CD8-positive, alpha-beta T cell (primary cell): ENCODE measurements at regions of chr1 and their contacts with region 1.

Region 1: GRCh38 chr1:25905680-25906643 is at the start of gene STMN1:
- DNase-seq: peak; percentile 77 to 93 (median 88)
- ATAC-seq: peak; percentile 72
- H3K4me3 ChIP-seq: peak within 1 kb of the TSS; percentile 63 to 68
- H3K4me3 Mint-ChIP-seq: peak within 1 kb of the TSS; percentile 95
- H3K27ac ChIP-seq: peak within 1 kb of the TSS; percentile 70 to 71
- H3K27ac Mint-ChIP-seq: peak within 1 kb of the TSS; percentile 95
- H3K4me1 ChIP-seq: peaks cover 8% of the 10 kb centered on the region
- H3K4me1 Mint-ChIP-seq: peaks cover 18% of the 10 kb centered on the region
- H3K27me3 ChIP-seq: no peaks in the 10 kb centered on the region
- H3K27me3 Mint-ChIP-seq: no peaks in the 10 kb centered on the region
- CTCF ChIP-seq: no peak
- total RNA-seq, gene STMN1: 18.5 to 19.6 TPM

Region 2: GRCh38 chr1:25858906-25859789 is 46.8 kb before region 1 on chr1 and contains the start of gene AUNIP:
- CTCF ChIA-PET with region 1: no interaction called
- POLR2A ChIA-PET with region 1: interaction called, 3 read pairs
- intact Hi-C with region 1: loop called in 1 of 2 experiments (anchors 2 kb)
- DNase-seq: peak; percentile 72 to 95 (median 88)
- ATAC-seq: peak; percentile 99
- H3K4me3 ChIP-seq: peak within 1 kb of the TSS; percentile 63 to 75
- H3K4me3 Mint-ChIP-seq: peak within 1 kb of the TSS; percentile 92
- H3K27ac ChIP-seq: peak within 1 kb of the TSS; percentile 66 to 71
- H3K27ac Mint-ChIP-seq: peak within 1 kb of the TSS; percentile 89
- H3K4me1 ChIP-seq: peaks cover 16% of the 10 kb centered on the region
- H3K4me1 Mint-ChIP-seq: peaks cover 15% of the 10 kb centered on the region
- H3K27me3 ChIP-seq: no peaks in the 10 kb centered on the region
- H3K27me3 Mint-ChIP-seq: no peaks in the 10 kb centered on the region
- CTCF ChIP-seq: no peak
- total RNA-seq, gene AUNIP: 0.30 TPM in 1 of 2 experiments, not detected in the other

Region 3: DNA sequence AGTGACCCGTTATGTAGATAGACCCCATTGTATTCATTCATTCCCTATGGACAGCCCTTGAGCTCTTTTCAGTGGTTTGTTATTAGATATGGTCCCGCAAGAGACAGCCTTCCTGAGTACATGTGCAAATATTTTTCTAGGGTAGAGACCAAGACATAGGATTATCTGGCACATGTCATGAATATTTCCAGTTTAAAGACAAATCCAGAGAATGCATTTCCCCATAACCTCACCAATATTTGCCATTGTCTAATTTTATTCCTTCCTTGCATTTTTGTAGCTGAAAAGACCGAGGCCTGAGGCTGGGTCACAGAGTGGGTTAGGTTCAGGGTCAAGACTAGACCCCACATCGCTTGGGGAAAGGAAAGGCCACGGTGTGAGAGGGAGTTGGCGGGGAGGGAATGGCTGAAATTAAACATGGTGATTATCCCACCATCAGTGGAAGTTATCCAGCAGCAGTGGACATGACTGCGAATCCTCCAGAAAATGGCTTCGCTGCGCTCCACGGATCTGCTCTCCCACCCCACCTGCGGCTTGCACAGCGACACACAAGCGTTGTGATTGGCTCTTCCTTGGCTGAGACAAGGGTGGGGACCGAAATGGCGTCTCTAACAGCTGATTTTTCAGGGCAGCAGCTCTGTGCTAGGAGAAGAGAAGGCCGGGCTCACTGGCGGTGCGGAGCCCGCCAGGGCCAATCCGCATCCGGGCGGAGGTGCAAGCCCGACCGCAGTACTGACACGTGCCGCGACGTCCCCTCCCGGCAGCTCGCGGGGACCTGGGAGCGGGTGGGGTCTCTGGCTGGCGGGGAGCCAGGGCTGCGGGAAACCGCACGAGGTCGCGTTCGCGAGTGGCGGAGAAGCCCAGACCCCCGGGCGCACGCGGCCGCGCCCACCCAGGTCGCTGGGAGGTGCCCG is 16.4 kb after region 1 on chr1:
- CTCF ChIA-PET with region 1: interaction called, 5 read pairs
- POLR2A ChIA-PET with region 1: interaction called, 7 read pairs
- intact Hi-C with region 1: loop called in 1 of 2 experiments (anchors 1 kb)
- DNase-seq: peak in 7 of 9 experiments; percentile 38 to 78 (median 62)
- ATAC-seq: peak; percentile 75
- H3K4me3 ChIP-seq: peak overlapping the region; percentile 57 to 63
- H3K4me3 Mint-ChIP-seq: peak overlapping the region; percentile 88
- H3K27ac ChIP-seq: peak overlapping the region; percentile 6 to 24
- H3K27ac Mint-ChIP-seq: peak overlapping the region; percentile 70
- H3K4me1 ChIP-seq: peaks cover 27% of the 10 kb centered on the region
- H3K4me1 Mint-ChIP-seq: peaks cover 29% of the 10 kb centered on the region
- H3K27me3 ChIP-seq: no peaks in the 10 kb centered on the region
- H3K27me3 Mint-ChIP-seq: no peaks in the 10 kb centered on the region
- CTCF ChIP-seq: no peak

Region 4: DNA sequence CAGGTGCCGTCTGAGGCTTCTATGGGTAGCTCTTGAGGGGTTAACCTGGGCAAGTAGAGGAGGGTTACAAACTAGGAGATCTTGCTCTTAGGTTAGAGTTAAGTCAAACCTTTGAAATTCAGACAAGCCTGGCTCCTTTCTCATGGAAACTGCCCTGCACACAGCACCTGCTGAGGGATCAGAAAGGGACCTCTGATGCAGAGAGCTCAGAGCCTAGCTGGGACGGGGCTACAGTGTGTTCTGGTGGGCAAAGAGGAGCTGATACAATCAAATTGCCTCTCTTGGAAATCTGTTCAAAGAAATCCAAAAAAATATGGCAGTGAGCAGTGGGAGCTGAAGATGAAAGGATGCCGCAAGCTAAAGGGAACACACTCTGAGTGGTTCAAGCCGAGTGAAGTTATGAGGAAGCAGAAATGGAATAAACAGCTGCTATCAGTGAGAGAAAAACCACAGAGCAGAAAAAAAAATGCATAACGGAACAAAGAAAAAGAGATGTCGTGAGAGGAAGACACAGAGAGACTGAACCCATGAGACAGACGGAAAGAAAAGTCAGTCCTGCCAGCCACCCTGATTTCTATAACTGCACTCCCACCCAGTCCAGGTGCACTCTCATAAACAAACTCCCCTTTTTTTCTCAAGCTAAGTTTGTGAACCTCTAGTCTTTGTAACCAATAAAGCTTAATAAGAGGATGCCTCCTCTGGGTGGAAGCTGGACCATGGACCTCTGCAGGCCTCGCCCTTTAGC is 65.3 kb after region 1 on chr1:
- CTCF ChIA-PET with region 1: interaction called, 3 read pairs
- POLR2A ChIA-PET with region 1: interaction called, 7 read pairs
- intact Hi-C with region 1: loop called in 1 of 2 experiments (anchors 2 kb)
- DNase-seq: peak in 4 of 9 experiments; percentile 22 to 61 (median 40)
- ATAC-seq: peak; percentile 75
- H3K4me3 ChIP-seq: no peak overlapping the region
- H3K4me3 Mint-ChIP-seq: peak overlapping the region; percentile 56
- H3K27ac ChIP-seq: peak overlapping the region in 1 of 2 experiments; percentile 55
- H3K27ac Mint-ChIP-seq: peak overlapping the region; percentile 88
- H3K4me1 ChIP-seq: peaks cover 20% of the 10 kb centered on the region
- H3K4me1 Mint-ChIP-seq: peaks cover 31% of the 10 kb centered on the region
- H3K27me3 ChIP-seq: no peaks in the 10 kb centered on the region
- H3K27me3 Mint-ChIP-seq: no peaks in the 10 kb centered on the region
- CTCF ChIP-seq: no peak

Region 5: GRCh38 chr1:25997828-25998761 is 92.1 kb after region 1 on chr1 and contains the start of gene PAFAH2:
- CTCF ChIA-PET with region 1: interaction called, 442 read pairs
- POLR2A ChIA-PET with region 1: interaction called, 24 read pairs
- intact Hi-C with region 1: loop called (anchors 1 kb)
- DNase-seq: peak; percentile 93 to 100 (median 96)
- ATAC-seq: peak; percentile 96
- H3K4me3 ChIP-seq: peak within 1 kb of the TSS; percentile 62 to 72
- H3K4me3 Mint-ChIP-seq: peak within 1 kb of the TSS; percentile 92
- H3K27ac ChIP-seq: peak within 1 kb of the TSS; percentile 79 to 87
- H3K27ac Mint-ChIP-seq: peak within 1 kb of the TSS; percentile 99
- H3K4me1 ChIP-seq: peaks cover 19% of the 10 kb centered on the region
- H3K4me1 Mint-ChIP-seq: peaks cover 42% of the 10 kb centered on the region
- H3K27me3 ChIP-seq: no peaks in the 10 kb centered on the region
- H3K27me3 Mint-ChIP-seq: no peaks in the 10 kb centered on the region
- CTCF ChIP-seq: peak; percentile 92
- total RNA-seq, gene PAFAH2: 9.1 to 11.8 TPM

Region 6: DNA sequence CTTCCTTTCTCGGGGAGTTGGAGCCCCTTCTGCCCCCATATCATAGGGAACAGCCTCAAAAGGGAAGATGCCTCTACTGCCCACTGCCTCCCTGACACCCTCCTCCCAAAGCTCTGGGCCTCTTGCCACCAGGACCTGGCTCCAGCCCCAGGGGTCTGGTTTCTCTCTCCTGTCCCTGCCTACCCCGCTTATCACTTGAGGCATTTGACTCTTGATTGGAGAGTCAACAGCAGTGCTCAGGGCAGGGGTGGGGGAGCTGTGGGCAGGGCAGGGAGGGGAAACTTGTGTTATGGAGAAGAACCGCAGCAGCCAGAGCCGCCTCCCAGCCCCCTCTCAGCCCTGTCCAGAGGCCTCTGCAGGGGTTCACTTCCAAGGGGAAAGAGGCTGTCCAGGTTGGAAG is 160.9 kb after region 1 on chr1:
- CTCF ChIA-PET with region 1: no interaction called
- POLR2A ChIA-PET with region 1: no interaction called
- intact Hi-C with region 1: no loop called
- DNase-seq: no peak
- ATAC-seq: no peak
- H3K4me3 ChIP-seq: no peak overlapping the region
- H3K4me3 Mint-ChIP-seq: no peak overlapping the region
- H3K27ac ChIP-seq: no peak overlapping the region
- H3K27ac Mint-ChIP-seq: no peak overlapping the region
- H3K4me1 ChIP-seq: no peaks in the 10 kb centered on the region
- H3K4me1 Mint-ChIP-seq: no peaks in the 10 kb centered on the region
- H3K27me3 ChIP-seq: no peaks in the 10 kb centered on the region
- H3K27me3 Mint-ChIP-seq: peaks cover 6% of the 10 kb centered on the region
- CTCF ChIP-seq: no peak

Region 7: DNA sequence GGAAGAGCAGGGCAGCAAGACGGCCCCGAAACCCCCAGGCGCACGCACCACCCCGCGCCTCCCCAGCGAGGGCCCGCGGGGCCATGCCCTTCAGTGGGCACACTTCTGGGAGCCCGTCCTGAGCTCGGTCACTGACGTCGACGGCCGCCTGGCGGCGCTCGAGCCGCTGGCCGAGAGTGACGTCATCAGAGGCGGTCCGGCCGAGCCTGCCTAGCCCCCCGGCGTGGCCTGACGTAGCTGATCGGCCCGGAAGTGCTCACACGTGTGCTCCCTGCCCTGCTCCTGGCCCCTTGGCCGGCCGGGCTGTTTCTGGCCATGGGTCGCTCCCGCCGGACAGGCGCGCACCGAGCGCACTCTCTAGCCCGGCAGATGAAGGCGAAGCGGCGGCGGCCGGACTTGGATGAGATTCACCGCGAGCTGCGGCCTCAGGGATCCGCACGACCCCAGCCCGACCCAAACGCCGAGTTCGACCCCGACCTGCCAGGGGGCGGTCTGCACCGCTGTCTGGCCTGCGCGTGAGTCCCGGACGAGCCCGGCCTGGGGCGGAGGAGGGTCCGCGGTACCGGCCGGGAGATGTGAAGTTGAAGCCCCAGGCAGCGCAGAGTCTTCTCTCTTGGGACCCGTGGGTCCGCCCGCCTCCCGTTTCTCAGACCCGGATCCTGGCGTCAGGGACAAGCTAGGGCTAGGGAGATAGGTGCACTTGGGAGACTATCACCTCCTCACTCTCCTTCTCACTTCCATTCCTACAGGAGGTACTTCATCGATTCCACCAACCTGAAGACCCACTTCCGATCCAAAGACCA is 263.9 kb after region 1 on chr1 and contains the start of gene ZNF593:
- CTCF ChIA-PET with region 1: no interaction called
- POLR2A ChIA-PET with region 1: no interaction called
- intact Hi-C with region 1: loop called in 1 of 2 experiments (anchors 5 kb)
- DNase-seq: peak; percentile 69 to 91 (median 85)
- ATAC-seq: peak; percentile 92
- H3K4me3 ChIP-seq: peak within 1 kb of the TSS; percentile 85 to 89
- H3K4me3 Mint-ChIP-seq: peak within 1 kb of the TSS; percentile 87
- H3K27ac ChIP-seq: peak within 1 kb of the TSS; percentile 77 to 78
- H3K27ac Mint-ChIP-seq: peak within 1 kb of the TSS; percentile 88
- H3K4me1 ChIP-seq: peaks cover 11% of the 10 kb centered on the region
- H3K4me1 Mint-ChIP-seq: peaks cover 12% of the 10 kb centered on the region
- H3K27me3 ChIP-seq: no peaks in the 10 kb centered on the region
- H3K27me3 Mint-ChIP-seq: no peaks in the 10 kb centered on the region
- CTCF ChIP-seq: peak; percentile 74
- total RNA-seq, gene ZNF593: 8.1 to 8.8 TPM

Region 8: GRCh38 chr1:26431979-26432695 is 526.2 kb after region 1 on chr1 and contains the start of gene DHDDS:
- CTCF ChIA-PET with region 1: no interaction called
- POLR2A ChIA-PET with region 1: no interaction called
- intact Hi-C with region 1: loop called in 1 of 2 experiments (anchors 5 kb)
- DNase-seq: peak; percentile 96 to 99 (median 99)
- ATAC-seq: peak; percentile 96
- H3K4me3 ChIP-seq: peak within 1 kb of the TSS; percentile 72 to 78
- H3K4me3 Mint-ChIP-seq: peak within 1 kb of the TSS; percentile 95
- H3K27ac ChIP-seq: peak within 1 kb of the TSS; percentile 73 to 81
- H3K27ac Mint-ChIP-seq: peak within 1 kb of the TSS; percentile 96
- H3K4me1 ChIP-seq: peaks cover 20% of the 10 kb centered on the region
- H3K4me1 Mint-ChIP-seq: peaks cover 21% of the 10 kb centered on the region
- H3K27me3 ChIP-seq: no peaks in the 10 kb centered on the region
- H3K27me3 Mint-ChIP-seq: no peaks in the 10 kb centered on the region
- CTCF ChIP-seq: no peak
- total RNA-seq, gene DHDDS: 23.9 to 29.2 TPM

Region 9: DNA sequence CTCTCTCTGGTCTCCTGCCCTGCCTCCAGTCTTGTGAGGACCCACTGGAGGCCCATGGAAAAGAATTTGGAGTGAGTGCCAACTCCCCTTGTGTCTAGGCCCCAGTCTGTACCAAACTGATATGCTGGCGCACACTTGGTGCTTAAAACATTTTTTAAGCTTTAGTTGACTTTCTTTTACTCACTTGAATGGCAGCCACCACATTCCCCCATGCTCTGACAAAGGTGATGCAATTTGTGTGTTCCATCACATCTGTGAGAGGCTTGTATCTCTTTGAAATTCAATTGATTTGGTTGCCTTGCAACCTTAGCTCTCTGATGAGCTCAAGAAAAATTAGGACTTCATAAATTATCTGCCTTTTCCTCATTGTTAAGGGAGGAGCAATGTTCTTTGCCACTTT is 1298.0 kb after region 1 on chr1:
- CTCF ChIA-PET with region 1: no interaction called
- POLR2A ChIA-PET with region 1: no interaction called
- intact Hi-C with region 1: no loop called
- DNase-seq: no peak
- ATAC-seq: no peak
- H3K4me3 ChIP-seq: no peak overlapping the region
- H3K4me3 Mint-ChIP-seq: no peak overlapping the region
- H3K27ac ChIP-seq: no peak overlapping the region
- H3K27ac Mint-ChIP-seq: no peak overlapping the region
- H3K4me1 ChIP-seq: no peaks in the 10 kb centered on the region
- H3K4me1 Mint-ChIP-seq: no peaks in the 10 kb centered on the region
- H3K27me3 ChIP-seq: no peaks in the 10 kb centered on the region
- H3K27me3 Mint-ChIP-seq: no peaks in the 10 kb centered on the region
- CTCF ChIP-seq: no peak